HepG2 (cell line): ENCODE measurements at regions of chr1 and their contacts with region 1.

Region 1: DNA sequence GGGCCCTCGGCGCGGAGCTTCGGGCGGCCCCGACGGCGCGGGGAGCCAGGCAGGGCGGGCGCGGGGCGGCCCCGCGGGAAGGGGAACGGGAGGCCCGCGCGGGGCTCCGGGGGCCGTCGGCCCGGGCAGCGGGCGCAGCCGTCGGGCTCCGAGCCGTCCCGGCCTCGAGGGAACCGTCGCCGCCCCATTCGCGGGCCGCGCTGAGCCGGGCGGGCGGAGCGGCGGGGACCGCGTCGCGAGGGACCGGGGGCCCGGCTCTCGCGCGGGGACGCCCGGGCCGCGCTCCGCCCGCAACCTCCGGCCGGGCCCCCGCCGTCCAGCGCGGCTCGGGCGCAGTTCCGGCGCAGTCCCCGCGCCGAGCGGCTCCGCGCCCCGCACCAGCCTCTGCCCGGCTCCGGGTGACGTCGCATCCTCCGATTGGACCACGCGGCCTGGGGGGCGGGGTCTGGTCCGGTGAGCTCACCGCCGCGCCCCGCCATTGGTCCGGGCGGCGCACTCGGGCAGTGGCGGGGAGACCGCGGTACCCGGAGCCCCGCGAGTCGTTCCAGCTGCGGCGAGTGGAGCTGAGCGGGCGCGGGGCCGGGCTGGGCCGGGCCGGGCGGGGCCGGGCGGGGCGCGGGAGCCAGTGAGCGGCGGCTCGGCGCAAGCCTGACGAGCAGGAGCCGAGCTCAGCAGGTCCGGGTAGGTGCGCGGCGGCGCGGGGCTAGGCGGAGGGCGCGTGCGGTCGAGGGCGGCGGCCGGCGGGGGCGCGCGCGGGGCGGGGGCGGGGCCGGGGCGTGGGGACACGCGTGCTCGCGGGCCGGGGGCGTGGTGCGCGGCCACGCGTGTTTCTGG is 66.7 kb upstream of the VAMP3 start:
- DNase-seq: peak; percentile 77
- ATAC-seq: peak; percentile 93
- H3K4me3 ChIP-seq: peak overlapping the region; percentile 50 to 76 (median 71); a peak in 4 of 6 replicates
- H3K27ac ChIP-seq: no peak overlapping the region
- H3K4me1 ChIP-seq: peaks cover 15% of the 10 kb centered on the region
- H3K27me3 ChIP-seq: 0 out of 5 replicates have a peak, but pooled peaks cover 0 to 3% of the 10 kb centered on the region in 2 experiments
- CTCF ChIP-seq: no peak
- EP300 ChIP-seq: no peak
- POLR2A ChIP-seq: peak in 1 of 2 experiments; percentile 61; a peak in 3 of 4 replicates
- RAD21 ChIP-seq: 0 out of 2 replicates have a peak, but pooled peaks have one; percentile 14

Region 2: DNA sequence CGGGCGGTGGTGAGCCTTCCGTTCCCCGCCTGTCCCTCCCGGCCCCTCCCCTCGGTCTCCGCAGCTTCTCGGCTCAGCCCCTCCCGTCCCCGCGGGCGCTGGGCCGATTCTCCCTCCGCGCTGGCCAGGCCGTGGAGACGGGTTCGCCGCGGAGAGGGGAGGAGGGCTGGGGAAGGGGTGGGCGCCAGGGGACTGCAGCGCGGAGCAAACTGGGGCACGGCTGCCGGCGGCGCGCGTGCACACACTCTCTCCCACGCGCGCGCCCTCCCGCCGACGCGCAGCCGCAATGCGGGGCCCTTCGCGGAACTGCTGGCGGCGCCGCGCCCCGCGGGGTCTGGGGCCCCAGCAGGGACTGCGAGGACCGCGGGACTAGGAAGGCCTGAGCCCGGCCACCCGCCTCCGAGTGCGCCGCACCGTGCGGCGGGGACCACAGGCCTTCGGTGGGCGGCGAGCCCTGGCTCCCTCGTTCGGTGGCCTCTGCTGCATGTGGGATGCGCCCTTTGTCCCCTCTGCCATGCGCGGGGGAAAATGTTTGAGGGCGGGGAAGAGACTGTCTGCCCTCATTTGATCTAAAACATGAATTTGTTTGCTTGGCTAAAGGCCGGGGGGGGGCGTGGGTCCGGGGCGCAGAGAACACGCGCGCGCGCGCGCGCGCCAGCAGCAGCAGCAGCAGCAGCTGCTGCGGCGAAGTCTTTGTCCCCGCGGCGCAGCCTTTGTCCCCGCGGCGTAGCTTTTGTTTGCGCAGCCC is 24.1 kb before region 1 on chr1:
- CTCF ChIA-PET with region 1: no interaction called
- POLR2A ChIA-PET with region 1: interaction called, 94 read pairs
- in situ Hi-C with region 1: no loop called
- intact Hi-C with region 1: no loop called
- DNase-seq: no peak
- ATAC-seq: peak; percentile 52
- H3K4me3 ChIP-seq: peak overlapping the region; percentile 58 to 69 (median 69)
- H3K27ac ChIP-seq: peak overlapping the region; percentile 81
- H3K4me1 ChIP-seq: peaks cover 72% of the 10 kb centered on the region
- H3K27me3 ChIP-seq: peaks cover 3 to 15% of the 10 kb centered on the region in 2 experiments; a peak in 4 of 5 replicates
- CTCF ChIP-seq: no peak
- EP300 ChIP-seq: no peak
- POLR2A ChIP-seq: peak; percentile 38 to 56; a peak in 2 of 4 replicates
- RAD21 ChIP-seq: peak; percentile 16; the same call in 1 of the 2 replicates

Region 3: GRCh38 chr1:7690496-7691182 is 13.8 kb before region 1 on chr1:
- CTCF ChIA-PET with region 1: no interaction called
- POLR2A ChIA-PET with region 1: interaction called, 23 read pairs
- in situ Hi-C with region 1: no loop called
- intact Hi-C with region 1: no loop called
- DNase-seq: no peak
- ATAC-seq: no peak
- H3K4me3 ChIP-seq: no peak overlapping the region
- H3K27ac ChIP-seq: no peak overlapping the region
- H3K4me1 ChIP-seq: peaks cover 58% of the 10 kb centered on the region
- H3K27me3 ChIP-seq: peaks cover 0 to 24% of the 10 kb centered on the region in 2 experiments; a peak in 4 of 5 replicates
- CTCF ChIP-seq: no peak
- EP300 ChIP-seq: no peak
- POLR2A ChIP-seq: no peak
- RAD21 ChIP-seq: no peak

Region 4: GRCh38 chr1:7752512-7753417 is 48.3 kb after region 1 on chr1:
- CTCF ChIA-PET with region 1: no interaction called
- POLR2A ChIA-PET with region 1: interaction called, 7 read pairs
- in situ Hi-C with region 1: no loop called
- intact Hi-C with region 1: loop called (anchors 10 kb)
- DNase-seq: peak; percentile 69
- ATAC-seq: peak; percentile 66
- H3K4me3 ChIP-seq: peak overlapping the region in 1 of 3 experiments; percentile 5; a peak in 1 of 6 replicates
- H3K27ac ChIP-seq: no peak overlapping the region
- H3K4me1 ChIP-seq: peaks cover 34% of the 10 kb centered on the region
- H3K27me3 ChIP-seq: no peaks in the 10 kb centered on the region
- CTCF ChIP-seq: peak; percentile 77
- EP300 ChIP-seq: 0 out of 4 replicates have a peak, but pooled peaks of 1 of the 2 experiments have one; percentile 29
- POLR2A ChIP-seq: no peak
- RAD21 ChIP-seq: peak; percentile 67